H1 (cell line): ENCODE measurements at regions of chr1 and their contacts with region 1.

Region 1: GRCh38 chr1:225474986-225475820 is 47.4 kb upstream of the LBR start:
- DNase-seq: peak in 1 of 2 experiments; percentile 96
- H3K4me3 ChIP-seq: no peak overlapping the region
- H3K27ac ChIP-seq: no peak overlapping the region
- H3K4me1 ChIP-seq: peaks cover 0 to 6% (median 1%) of the 10 kb centered on the region in 4 experiments; a peak in 4 of 7 replicates
- H3K27me3 ChIP-seq: no peaks in the 10 kb centered on the region
- CTCF ChIP-seq: peak; percentile 100
- EP300 ChIP-seq: no peak
- POLR2A ChIP-seq: no peak
- RAD21 ChIP-seq: peak; percentile 100

Region 2: DNA sequence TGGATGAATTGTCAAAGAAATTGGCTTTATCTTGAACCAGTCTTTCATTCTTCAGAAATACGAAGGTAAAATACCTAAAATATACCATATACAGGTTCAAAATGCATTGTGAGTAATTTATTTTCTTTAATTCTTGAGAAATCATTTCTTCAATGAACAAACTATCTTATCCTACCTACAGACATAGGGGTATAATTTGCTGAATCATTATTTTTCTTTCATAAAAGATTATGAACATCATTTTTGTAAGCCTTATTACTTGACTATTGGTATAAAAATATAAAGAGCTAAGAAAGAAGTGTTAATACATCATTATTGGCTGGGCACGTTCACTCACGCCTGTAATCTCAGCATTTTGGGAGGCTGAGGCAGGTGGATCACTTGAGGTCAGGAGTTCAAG is 378.0 kb before region 1 on chr1:
- CTCF ChIA-PET with region 1: no interaction called
- POLR2A ChIA-PET with region 1: no interaction called
- DNase-seq: no peak
- H3K4me3 ChIP-seq: no peak overlapping the region
- H3K27ac ChIP-seq: no peak overlapping the region
- H3K4me1 ChIP-seq: no peaks in the 10 kb centered on the region
- H3K27me3 ChIP-seq: no peaks in the 10 kb centered on the region
- CTCF ChIP-seq: no peak
- EP300 ChIP-seq: no peak
- POLR2A ChIP-seq: no peak
- RAD21 ChIP-seq: no peak

Region 3: DNA sequence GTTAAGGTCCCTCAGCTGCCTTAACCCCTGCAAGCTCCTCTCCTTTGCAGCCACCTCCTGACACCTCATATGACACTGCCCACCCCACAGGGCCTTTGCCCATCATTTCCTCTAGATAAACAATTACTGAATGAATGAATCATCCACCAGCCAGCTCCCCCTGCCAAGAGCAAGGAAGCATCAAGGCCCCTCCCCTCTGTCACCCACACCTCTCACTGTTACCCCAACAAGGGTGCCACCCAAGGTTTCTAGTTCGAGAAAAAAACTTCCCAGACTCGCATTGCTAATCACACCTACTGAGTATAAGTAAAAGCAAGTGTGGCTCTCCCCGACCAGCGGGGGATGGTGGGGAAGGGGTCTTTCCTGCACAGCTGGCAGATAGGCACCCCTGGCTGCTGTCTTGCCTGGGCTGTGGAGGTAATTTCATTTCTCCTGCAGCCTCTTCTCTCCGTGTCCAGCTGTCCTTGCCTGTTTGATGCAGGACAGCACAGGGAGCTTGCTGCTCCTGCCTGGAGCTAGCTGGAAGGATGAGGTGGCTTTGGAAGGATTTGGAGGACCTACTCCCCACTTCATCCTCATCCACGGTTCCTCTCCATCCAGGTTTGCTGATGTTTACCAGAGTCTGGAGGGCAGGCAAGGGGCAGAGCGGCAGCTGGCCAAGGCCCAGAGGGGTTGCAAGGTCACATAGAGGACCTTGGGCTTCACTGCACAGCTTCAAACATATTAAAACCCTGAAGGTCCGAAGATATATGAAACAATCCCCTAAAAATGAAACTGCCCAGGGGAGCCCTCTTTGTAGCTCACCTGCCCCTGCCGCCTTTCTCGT is 14.3 kb before region 1 on chr1:
- CTCF ChIA-PET with region 1: interaction called, 20 read pairs
- POLR2A ChIA-PET with region 1: interaction called, 6 read pairs
- DNase-seq: no peak
- H3K4me3 ChIP-seq: no peak overlapping the region
- H3K27ac ChIP-seq: no peak overlapping the region
- H3K4me1 ChIP-seq: peaks cover 6 to 20% (median 12%) of the 10 kb centered on the region in 4 experiments
- H3K27me3 ChIP-seq: no peaks in the 10 kb centered on the region; a peak in 1 of 7 replicates
- CTCF ChIP-seq: no peak
- EP300 ChIP-seq: no peak
- POLR2A ChIP-seq: no peak
- RAD21 ChIP-seq: no peak

Region 4: DNA sequence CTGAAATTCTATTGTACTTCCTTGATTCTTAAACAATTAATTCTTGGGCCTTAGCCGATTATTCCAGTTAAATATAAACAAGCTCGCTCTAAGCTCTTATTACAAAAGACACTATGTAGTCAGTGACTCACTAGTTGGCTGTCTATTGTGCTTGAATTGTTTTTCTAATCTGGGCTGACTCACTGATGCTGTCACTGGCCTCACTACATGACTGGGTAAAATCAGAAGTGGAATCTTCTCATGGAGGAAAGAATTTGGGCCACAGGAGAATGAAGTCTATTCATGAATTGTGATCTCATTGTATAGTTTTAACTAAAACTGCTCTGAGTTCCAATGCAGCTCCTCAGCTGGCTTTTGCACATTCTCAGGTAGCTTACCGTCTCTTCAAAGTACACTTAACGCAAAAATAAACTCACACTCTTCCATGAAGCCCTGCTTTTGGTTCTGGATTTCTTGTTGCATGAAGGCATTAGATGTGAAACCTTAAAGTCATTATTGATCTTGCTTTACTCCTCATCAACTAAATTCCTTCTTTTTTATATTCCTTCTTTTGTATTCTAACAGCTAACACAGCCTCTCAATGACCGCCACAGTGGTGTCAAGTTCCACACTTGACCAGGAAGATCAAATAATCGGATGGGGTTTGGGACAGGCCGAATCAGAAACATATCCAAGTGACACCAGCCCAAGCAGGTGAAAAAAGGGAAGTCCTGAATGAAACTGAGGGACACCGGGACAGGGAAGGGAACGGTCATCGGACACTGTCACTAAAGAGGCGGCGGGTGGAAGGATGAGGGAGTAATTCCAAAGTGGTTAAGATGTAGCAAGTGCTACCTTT is 33.6 kb after region 1 on chr1:
- CTCF ChIA-PET with region 1: interaction called, 24 read pairs
- POLR2A ChIA-PET with region 1: no interaction called
- DNase-seq: peak; percentile 29 to 46
- H3K4me3 ChIP-seq: 0 out of 8 replicates have a peak overlapping the region, but pooled peaks of 1 of the 4 experiments have one; percentile 4
- H3K27ac ChIP-seq: peak overlapping the region; percentile 33
- H3K4me1 ChIP-seq: peaks cover 5 to 19% (median 15%) of the 10 kb centered on the region in 4 experiments; a peak in 5 of 7 replicates
- H3K27me3 ChIP-seq: no peaks in the 10 kb centered on the region
- CTCF ChIP-seq: no peak
- EP300 ChIP-seq: no peak
- POLR2A ChIP-seq: no peak
- RAD21 ChIP-seq: no peak

Region 5: DNA sequence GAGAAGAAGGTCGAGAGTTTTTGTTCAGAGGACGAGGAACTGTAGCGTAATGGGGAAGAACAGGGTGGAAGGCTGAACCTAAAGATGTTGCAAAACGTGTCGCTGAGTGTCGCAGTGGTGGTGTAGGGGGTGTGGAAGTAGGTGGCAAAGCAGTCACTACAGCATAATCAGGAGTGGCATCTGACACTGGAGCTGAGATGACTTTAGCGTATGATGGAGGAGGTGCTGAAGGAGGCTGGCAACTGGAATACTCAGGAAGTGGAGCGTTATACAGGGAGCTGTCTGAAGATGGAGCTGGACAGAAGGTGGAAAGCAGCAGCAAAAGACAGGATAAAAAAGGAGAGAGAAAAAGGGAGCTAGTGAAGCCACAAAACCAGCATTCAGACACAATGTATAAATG is 42.5 kb after region 1 on chr1:
- CTCF ChIA-PET with region 1: interaction called, 15 read pairs
- POLR2A ChIA-PET with region 1: no interaction called
- DNase-seq: no peak
- H3K4me3 ChIP-seq: no peak overlapping the region
- H3K27ac ChIP-seq: no peak overlapping the region
- H3K4me1 ChIP-seq: peaks cover 2 to 8% (median 6%) of the 10 kb centered on the region in 4 experiments; a peak in 3 of 7 replicates
- H3K27me3 ChIP-seq: no peaks in the 10 kb centered on the region
- CTCF ChIP-seq: no peak
- EP300 ChIP-seq: no peak
- POLR2A ChIP-seq: no peak
- RAD21 ChIP-seq: no peak

Region 6: GRCh38 chr1:225652729-225653462 is 177.7 kb after region 1 on chr1 and contains the start of gene ENAH:
- CTCF ChIA-PET with region 1: interaction called, 43 read pairs
- POLR2A ChIA-PET with region 1: interaction called, 19 read pairs
- DNase-seq: peak in 1 of 2 experiments; percentile 83
- H3K4me3 ChIP-seq: peak within 1 kb of the TSS; percentile 94 to 100 (median 96)
- H3K27ac ChIP-seq: peak within 1 kb of the TSS; percentile 93
- H3K4me1 ChIP-seq: peaks cover 0 to 3% (median 0%) of the 10 kb centered on the region in 4 experiments; a peak in 2 of 7 replicates
- H3K27me3 ChIP-seq: no peaks in the 10 kb centered on the region
- CTCF ChIP-seq: no peak
- EP300 ChIP-seq: peak in 1 of 2 experiments; percentile 67; a peak in 1 of 3 replicates
- POLR2A ChIP-seq: peak in 1 of 2 experiments; percentile 84; a peak in 2 of 3 replicates
- RAD21 ChIP-seq: no peak
- total RNA-seq, gene ENAH: 318 and 335 TPM in 2 replicates